ENCODE measurements at regions of chr12 and their contacts with region 1.

Region 1: GRCh38 chr12:105420659-105421240 is 90.3 kb downstream of the C12orf75 start:
- DNase-seq: peak; percentile 70 to 77 (median 74)
- ATAC-seq: peak; percentile 63 to 93 (median 90)
- H3K4me3 ChIP-seq: no peak overlapping the region
- H3K27ac ChIP-seq: peak overlapping the region in 1 of 12 donors; percentile 20
- H3K4me1 ChIP-seq: peaks cover 0 to 6% (median 0%) of the 10 kb centered on the region in 12 donors
- H3K27me3 ChIP-seq: no peaks in the 10 kb centered on the region
- CTCF ChIP-seq: peak; percentile 84 to 94 (median 92)
- POLR2A ChIP-seq: no peak

Region 2: DNA sequence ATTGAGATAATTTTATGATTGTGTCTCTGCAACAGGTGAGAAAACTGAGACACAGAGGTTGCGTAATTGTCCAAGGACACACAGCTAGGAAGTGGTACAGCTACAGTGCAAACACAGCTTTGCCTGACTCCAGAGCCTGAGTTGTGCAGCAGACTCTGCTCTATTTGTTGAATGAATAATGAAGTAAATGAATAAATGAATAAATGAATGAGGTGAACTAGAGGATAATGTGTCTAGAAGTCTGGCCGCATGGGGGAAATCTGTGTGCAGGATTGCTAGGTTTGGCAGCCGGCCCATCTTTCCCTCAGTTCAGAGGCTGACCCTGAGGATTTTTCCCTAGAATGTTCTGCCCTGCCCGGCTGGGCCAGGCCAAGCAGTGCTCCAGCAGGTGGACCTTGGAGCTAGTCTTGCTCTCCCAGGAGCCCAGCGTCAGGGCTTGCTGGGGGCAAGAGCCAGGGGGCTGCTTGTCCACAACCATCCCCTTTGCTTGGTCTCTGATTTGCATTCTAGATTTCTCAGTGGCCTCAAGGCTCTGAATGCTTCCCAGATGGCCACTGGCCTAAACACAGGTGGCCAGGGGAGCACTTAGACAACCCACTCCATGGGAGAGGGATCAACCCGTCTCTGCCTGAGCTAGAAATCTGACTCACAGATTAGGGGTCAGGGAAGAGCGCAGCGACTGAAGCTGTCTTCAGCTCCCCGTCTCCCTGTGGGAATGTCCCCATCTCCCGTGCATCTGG is 135.0 kb after region 1 on chr12:
- intact Hi-C with region 1: loop called in 1 of 10 experiments (anchors 10 kb)
- DNase-seq: no peak
- ATAC-seq: no peak
- H3K4me3 ChIP-seq: no peak overlapping the region
- H3K27ac ChIP-seq: no peak overlapping the region
- H3K4me1 ChIP-seq: peaks cover 0 to 16% (median 0%) of the 10 kb centered on the region in 12 donors
- H3K27me3 ChIP-seq: no peaks in the 10 kb centered on the region
- CTCF ChIP-seq: no peak
- POLR2A ChIP-seq: no peak

Region 3: DNA sequence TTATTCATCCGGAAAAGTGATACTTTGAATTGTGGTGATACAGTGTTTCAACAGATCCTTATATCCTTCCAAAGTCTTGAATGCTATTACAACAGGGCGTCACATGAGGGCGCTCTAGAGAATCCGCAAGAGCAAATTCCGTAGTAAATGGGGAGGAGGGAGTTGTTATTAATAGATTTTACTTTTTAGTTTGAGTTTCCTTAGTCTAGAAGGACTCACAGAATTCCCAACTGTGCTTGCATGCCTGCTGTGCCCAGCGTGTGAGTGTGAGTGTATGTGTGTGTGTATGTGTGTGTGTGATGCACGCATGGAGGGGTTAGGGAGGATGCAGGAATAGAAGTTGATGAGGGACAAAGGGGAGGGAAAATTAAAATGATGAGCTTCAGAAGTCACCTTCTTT is 285.0 kb after region 1 on chr12:
- intact Hi-C with region 1: loop called in 4 of 10 experiments (anchors 2 to 10 kb)
- DNase-seq: peak in 4 of 5 donors; percentile 32 to 58 (median 46)
- ATAC-seq: peak; percentile 17 to 72 (median 60)
- H3K4me3 ChIP-seq: no peak overlapping the region
- H3K27ac ChIP-seq: peak overlapping the region in 9 of 12 donors; percentile 24 to 61 (median 55)
- H3K4me1 ChIP-seq: peaks cover 0 to 19% (median 11%) of the 10 kb centered on the region in 12 donors
- H3K27me3 ChIP-seq: no peaks in the 10 kb centered on the region
- CTCF ChIP-seq: peak; percentile 72 to 92 (median 86)
- POLR2A ChIP-seq: no peak

Region 4: GRCh38 chr12:106205208-106206071 is 784.7 kb after region 1 on chr12:
- intact Hi-C with region 1: loop called in 5 of 10 experiments (anchors 1 to 5 kb)
- DNase-seq: peak; percentile 57 to 85 (median 78)
- ATAC-seq: peak; percentile 99 to 100 (median 100)
- H3K4me3 ChIP-seq: no peak overlapping the region
- H3K27ac ChIP-seq: peak overlapping the region in 2 of 12 donors; percentile 31 to 37
- H3K4me1 ChIP-seq: no peaks in the 10 kb centered on the region
- H3K27me3 ChIP-seq: no peaks in the 10 kb centered on the region
- CTCF ChIP-seq: peak in 11 of 12 donors; percentile 24 to 60 (median 46)
- POLR2A ChIP-seq: no peak

Region 5: GRCh38 chr12:106282457-106283097 is 861.8 kb after region 1 on chr12:
- intact Hi-C with region 1: loop called in 2 of 10 experiments (anchors 5 kb)
- DNase-seq: peak in 2 of 5 donors; percentile 34 to 47
- ATAC-seq: peak; percentile 23 to 63 (median 56)
- H3K4me3 ChIP-seq: no peak overlapping the region
- H3K27ac ChIP-seq: no peak overlapping the region
- H3K4me1 ChIP-seq: peaks cover 0 to 22% (median 12%) of the 10 kb centered on the region in 12 donors
- H3K27me3 ChIP-seq: no peaks in the 10 kb centered on the region
- CTCF ChIP-seq: peak; percentile 56 to 76 (median 70)
- POLR2A ChIP-seq: no peak

Measured in heart left ventricle (tissue), 16 donors.